Activated T-helper 2 cell treated with anti-CD3 and anti-CD28 coated beads, Interferon-gamma antibody, Interleukin-2, Interleukin-4, amounts not matched to agents 10 μg/mL and 5 μg/mL and 100 μg/mL, durations not matched to agents 14 hours and 24 hours and 36 hours (primary cell): ENCODE measurements at regions of chr2 and their contacts with region 1.

Region 1: GRCh38 chr2:177164584-177165052 is 48.0 kb upstream of the HNRNPA3 start:
- DNase-seq: peak; percentile 65
- H3K4me3 Mint-ChIP-seq: no peak overlapping the region
- H3K27ac Mint-ChIP-seq: no peak overlapping the region
- H3K4me1 Mint-ChIP-seq: peaks cover 28% of the 10 kb centered on the region
- H3K27me3 Mint-ChIP-seq: peaks cover 6% of the 10 kb centered on the region

Region 2: GRCh38 chr2:177124371-177124770 is 40.2 kb before region 1 on chr2:
- intact Hi-C with region 1: no loop called
- DNase-seq: no peak
- H3K4me3 Mint-ChIP-seq: no peak overlapping the region
- H3K27ac Mint-ChIP-seq: no peak overlapping the region
- H3K4me1 Mint-ChIP-seq: no peaks in the 10 kb centered on the region
- H3K27me3 Mint-ChIP-seq: peaks cover 32% of the 10 kb centered on the region

Region 3: GRCh38 chr2:177263451-177264208 is 99.0 kb after region 1 on chr2:
- intact Hi-C with region 1: loop called (anchors 1 kb)
- DNase-seq: peak; percentile 94
- H3K4me3 Mint-ChIP-seq: peak overlapping the region; percentile 90
- H3K27ac Mint-ChIP-seq: peak overlapping the region; percentile 93
- H3K4me1 Mint-ChIP-seq: peaks cover 51% of the 10 kb centered on the region
- H3K27me3 Mint-ChIP-seq: no peaks in the 10 kb centered on the region

Region 4: GRCh38 chr2:177419274-177419673 is 254.7 kb after region 1 on chr2:
- intact Hi-C with region 1: loop called (anchors 1 kb)
- DNase-seq: no peak
- H3K4me3 Mint-ChIP-seq: no peak overlapping the region
- H3K27ac Mint-ChIP-seq: no peak overlapping the region
- H3K4me1 Mint-ChIP-seq: peaks cover 28% of the 10 kb centered on the region
- H3K27me3 Mint-ChIP-seq: no peaks in the 10 kb centered on the region

Region 5: DNA sequence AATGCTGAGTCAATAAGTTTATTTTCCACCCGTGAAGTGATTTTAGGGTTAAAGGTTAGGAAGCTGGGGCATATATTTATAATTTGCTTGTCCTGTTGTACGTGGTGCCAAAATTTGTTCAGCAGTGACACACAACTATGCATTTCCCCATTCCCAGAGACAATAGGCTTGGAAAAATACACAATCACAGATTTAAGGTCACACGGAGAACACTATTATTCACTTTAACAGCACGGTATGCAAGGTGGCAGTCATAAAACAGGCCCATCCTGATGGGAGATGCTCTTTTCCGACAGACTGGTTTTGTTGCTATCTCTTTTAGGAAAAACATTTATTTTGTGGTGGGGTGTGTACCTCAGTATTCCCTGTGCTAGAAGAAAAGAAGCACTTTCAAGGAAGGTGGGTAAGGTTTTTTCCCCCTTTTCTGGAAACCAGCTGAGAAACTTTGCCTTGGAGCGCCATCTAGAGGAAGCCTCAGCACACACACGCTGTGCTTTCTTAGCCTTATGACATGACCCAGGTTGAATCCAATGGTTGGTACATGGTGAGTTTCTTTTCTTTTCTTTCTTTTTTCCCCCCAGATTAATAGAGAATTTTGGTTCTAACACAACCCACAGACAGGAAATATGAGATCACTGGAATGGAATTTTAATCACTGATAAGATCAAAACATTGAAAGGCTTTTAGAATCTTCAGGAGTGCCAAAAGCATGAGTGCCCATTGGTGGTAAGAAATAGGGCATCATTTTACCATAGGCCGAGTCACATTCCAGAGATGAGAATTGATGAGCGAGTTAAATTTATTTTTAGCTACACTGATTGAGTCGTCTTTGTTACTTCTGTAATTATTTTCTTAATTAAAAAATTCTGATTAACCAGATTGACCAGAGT is 560.0 kb after region 1 on chr2:
- intact Hi-C with region 1: loop called (anchors 1 kb)
- DNase-seq: peak; percentile 15
- H3K4me3 Mint-ChIP-seq: no peak overlapping the region
- H3K27ac Mint-ChIP-seq: no peak overlapping the region
- H3K4me1 Mint-ChIP-seq: peaks cover 2% of the 10 kb centered on the region
- H3K27me3 Mint-ChIP-seq: peaks cover 34% of the 10 kb centered on the region